ENCODE measurements at regions of chr15 and their contacts with region 1.

Region 1: GRCh38 chr15:75801859-75802593 is 41.2 kb upstream of the UBE2Q2 start:
- H3K4me3 ChIP-seq: no peak overlapping the region
- H3K27ac ChIP-seq: no peak overlapping the region
- H3K4me1 ChIP-seq: no peaks in the 10 kb centered on the region
- CTCF ChIP-seq: peak; percentile 92

Region 2: DNA sequence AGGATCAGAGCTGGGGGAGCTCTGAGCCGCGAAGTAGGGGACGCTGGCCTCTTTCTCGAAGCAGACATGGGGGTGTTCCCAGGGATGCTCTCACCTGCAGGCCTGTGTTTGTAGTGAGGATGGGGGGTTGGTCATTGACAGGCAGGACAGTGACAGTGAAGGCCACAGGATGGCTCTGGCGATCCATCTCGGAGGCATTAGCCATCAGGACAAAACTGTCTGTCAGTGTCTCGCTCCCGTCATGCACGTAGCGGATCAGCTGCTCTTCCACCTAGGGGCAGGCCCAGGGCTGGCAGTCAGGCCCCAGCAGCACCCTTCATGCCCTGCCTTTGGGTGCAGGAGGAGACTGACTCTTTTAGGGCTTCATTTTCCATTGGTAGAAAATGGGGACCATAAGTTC is 117.4 kb before region 1 on chr15:
- CTCF ChIA-PET with region 1: interaction called, 65 read pairs
- POLR2A ChIA-PET with region 1: no interaction called
- H3K4me3 ChIP-seq: no peak overlapping the region
- H3K27ac ChIP-seq: no peak overlapping the region
- H3K4me1 ChIP-seq: no peaks in the 10 kb centered on the region
- CTCF ChIP-seq: peak; percentile 46; the same call in 1 of the 2 replicates

Region 3: DNA sequence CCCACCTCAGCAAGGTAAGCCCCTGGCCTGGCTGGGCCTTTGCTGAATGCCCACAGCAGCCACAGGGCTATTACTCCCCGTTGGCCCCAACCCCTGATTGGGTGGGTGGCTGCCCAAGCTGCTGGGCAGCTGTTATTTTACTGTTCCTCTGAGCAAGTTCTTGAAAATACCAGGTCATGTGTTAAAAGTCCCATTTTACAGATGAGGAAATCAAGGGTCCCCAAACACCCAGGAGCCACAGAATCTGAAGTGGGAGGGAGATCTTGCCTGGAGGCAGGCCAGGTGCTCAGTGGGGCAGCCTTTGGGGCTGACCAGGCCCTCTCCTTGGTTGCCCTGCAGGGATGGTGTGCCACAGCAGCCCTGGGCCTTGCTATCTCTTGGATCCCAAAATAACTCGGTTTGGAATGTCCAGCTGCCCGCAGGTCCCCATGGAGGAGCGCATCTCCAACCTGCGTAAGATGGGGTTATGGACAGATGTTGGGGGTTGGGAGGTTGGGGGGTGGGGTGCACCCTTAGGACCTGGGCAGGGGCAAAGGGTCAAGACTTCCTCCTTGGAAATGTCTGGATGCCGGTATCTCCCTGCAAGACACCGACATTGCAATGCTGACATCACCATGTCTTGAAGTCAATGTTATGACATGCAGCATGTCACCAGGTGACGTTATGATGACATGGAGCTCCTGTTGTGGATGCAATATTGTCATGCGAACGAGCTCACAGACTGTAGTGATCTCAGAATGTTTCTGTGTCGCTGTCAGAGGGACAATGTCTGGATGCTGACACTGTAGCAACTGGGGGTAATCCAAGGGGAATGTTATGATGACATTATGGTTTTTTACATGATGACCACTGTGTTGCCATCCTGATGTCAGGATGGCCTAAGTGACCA is 76.1 kb before region 1 on chr15:
- CTCF ChIA-PET with region 1: interaction called, 53 read pairs
- POLR2A ChIA-PET with region 1: no interaction called
- H3K4me3 ChIP-seq: no peak overlapping the region
- H3K27ac ChIP-seq: no peak overlapping the region
- H3K4me1 ChIP-seq: no peaks in the 10 kb centered on the region; the same call in 1 of the 2 replicates
- CTCF ChIP-seq: no peak

Region 4: GRCh38 chr15:75745305-75745704 is 56.7 kb before region 1 on chr15:
- CTCF ChIA-PET with region 1: interaction called, 10 read pairs
- POLR2A ChIA-PET with region 1: no interaction called
- H3K4me3 ChIP-seq: no peak overlapping the region
- H3K27ac ChIP-seq: no peak overlapping the region
- H3K4me1 ChIP-seq: no peaks in the 10 kb centered on the region
- CTCF ChIP-seq: no peak

Region 5: DNA sequence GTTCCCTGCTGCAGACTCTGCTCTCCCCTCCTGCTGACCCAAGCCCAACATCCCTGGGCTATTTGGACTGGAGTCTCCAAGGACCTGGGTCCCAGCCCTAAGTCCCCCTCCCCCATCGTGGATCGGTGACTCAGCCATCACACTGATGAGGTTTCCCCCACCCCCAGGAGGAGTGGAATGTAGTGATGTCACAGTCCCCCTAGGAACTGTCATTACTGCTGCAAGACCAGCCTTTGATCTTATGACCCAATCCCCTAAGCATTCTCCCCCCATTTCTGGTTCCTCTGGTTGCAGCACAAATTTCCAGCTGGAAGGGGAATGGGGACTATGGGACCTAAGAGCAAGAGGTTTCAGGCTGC is 26.0 kb before region 1 on chr15:
- CTCF ChIA-PET with region 1: interaction called, 16 read pairs
- POLR2A ChIA-PET with region 1: no interaction called
- H3K4me3 ChIP-seq: no peak overlapping the region
- H3K27ac ChIP-seq: no peak overlapping the region
- H3K4me1 ChIP-seq: peaks cover 6% of the 10 kb centered on the region; the same call in 1 of the 2 replicates
- CTCF ChIP-seq: no peak

Measured in HEK293 (cell line).